ENCODE measurements at regions of chr1 and their contacts with region 1.

Region 1: DNA sequence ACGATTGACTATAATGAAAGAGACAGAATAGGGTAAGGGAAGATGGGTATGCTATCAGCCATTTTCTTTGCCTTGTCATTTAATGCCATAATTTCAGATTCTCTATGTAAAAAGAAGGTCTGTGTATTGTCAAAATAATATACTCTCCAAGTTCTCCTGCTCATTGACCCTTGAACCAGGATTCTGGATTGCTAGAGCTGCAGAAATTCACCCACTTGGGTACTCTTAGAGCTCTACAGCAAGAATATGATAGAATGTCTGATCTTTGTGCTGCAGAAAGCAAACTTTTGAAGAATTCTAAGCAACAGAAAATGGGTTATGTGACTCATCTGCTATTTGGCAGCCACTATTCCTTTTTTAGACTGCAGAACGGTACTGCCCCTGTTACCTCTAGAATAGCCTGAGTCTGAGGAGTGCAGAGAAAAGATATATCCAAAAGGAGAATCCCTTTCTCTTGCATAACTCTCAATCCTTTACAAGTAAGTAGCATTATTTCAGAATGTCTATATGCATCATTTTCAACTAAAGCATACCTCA is 78.2 kb upstream of the TENT5C start:
- DNase-seq: no peak
- ATAC-seq: no peak
- H3K4me3 ChIP-seq: no peak overlapping the region
- H3K27ac ChIP-seq: no peak overlapping the region
- H3K4me1 ChIP-seq: peaks cover 0 to 9% (median 0%) of the 10 kb centered on the region in 9 donors
- H3K27me3 ChIP-seq: no peaks in the 10 kb centered on the region
- CTCF ChIP-seq: no peak

Region 2: GRCh38 chr1:116092752-116093482 is 1434.7 kb before region 1 on chr1:
- intact Hi-C with region 1: no loop called
- DNase-seq: no peak
- ATAC-seq: no peak
- H3K4me3 ChIP-seq: no peak overlapping the region
- H3K27ac ChIP-seq: no peak overlapping the region
- H3K4me1 ChIP-seq: peaks cover 0 to 3% (median 0%) of the 10 kb centered on the region in 9 donors
- H3K27me3 ChIP-seq: no peaks in the 10 kb centered on the region
- CTCF ChIP-seq: no peak

Region 3: DNA sequence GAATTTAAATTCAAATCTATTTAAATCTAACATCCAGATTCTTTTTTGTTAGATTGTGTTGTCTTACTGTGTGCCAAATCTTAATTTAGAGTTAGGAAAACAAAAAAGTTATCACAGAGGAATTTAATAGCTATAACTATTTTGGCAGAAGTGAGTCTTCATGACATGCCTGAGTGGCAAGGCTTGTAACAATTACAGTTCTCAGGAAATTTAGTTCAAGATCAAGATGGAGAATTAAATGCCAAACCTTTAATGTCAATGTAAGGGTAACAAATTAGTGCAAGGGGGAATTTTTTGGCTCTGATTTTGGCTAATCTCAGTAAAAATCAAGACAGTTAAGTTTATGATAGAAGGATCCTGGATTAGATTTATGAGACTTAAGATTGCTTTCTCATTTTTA is 343.4 kb after region 1 on chr1:
- intact Hi-C with region 1: loop called in 1 of 10 experiments (anchors 10 kb)
- DNase-seq: no peak
- ATAC-seq: no peak
- H3K4me3 ChIP-seq: no peak overlapping the region
- H3K27ac ChIP-seq: no peak overlapping the region
- H3K4me1 ChIP-seq: peaks cover 0 to 7% (median 0%) of the 10 kb centered on the region in 9 donors
- H3K27me3 ChIP-seq: no peaks in the 10 kb centered on the region
- CTCF ChIP-seq: no peak

Measured in heart right ventricle (tissue), 16 donors.